Natural killer cell (primary cell): ENCODE measurements at regions of chr14 and their contacts with region 1.

Region 1: GRCh38 chr14:55430024-55430690 is 10.3 kb downstream of the TBPL2 start:
- DNase-seq: peak in 1 of 2 donors; percentile 84
- ATAC-seq: peak; percentile 74 to 89 (median 88)
- H3K4me3 ChIP-seq: no peak overlapping the region
- H3K4me3 Mint-ChIP-seq: no peak overlapping the region
- H3K27ac ChIP-seq: no peak overlapping the region
- H3K27ac Mint-ChIP-seq: no peak overlapping the region
- H3K4me1 ChIP-seq: peaks cover 6% of the 10 kb centered on the region
- H3K4me1 Mint-ChIP-seq: peaks cover 9 to 15% of the 10 kb centered on the region in 2 donors
- H3K27me3 ChIP-seq: no peaks in the 10 kb centered on the region
- H3K27me3 Mint-ChIP-seq: peaks cover 0 to 12% of the 10 kb centered on the region in 2 donors
- CTCF ChIP-seq: peak; percentile 28

Region 2: GRCh38 chr14:55245657-55246268 is 184.4 kb before region 1 on chr14:
- intact Hi-C with region 1: loop called (anchors 1 kb)
- DNase-seq: peak in 1 of 2 donors; percentile 70
- ATAC-seq: peak in 2 of 3 donors; percentile 65 to 72
- H3K4me3 ChIP-seq: no peak overlapping the region
- H3K4me3 Mint-ChIP-seq: no peak overlapping the region
- H3K27ac ChIP-seq: no peak overlapping the region
- H3K27ac Mint-ChIP-seq: no peak overlapping the region
- H3K4me1 ChIP-seq: no peaks in the 10 kb centered on the region
- H3K4me1 Mint-ChIP-seq: no peaks in the 10 kb centered on the region
- H3K27me3 ChIP-seq: no peaks in the 10 kb centered on the region
- H3K27me3 Mint-ChIP-seq: peaks cover 29 to 51% of the 10 kb centered on the region in 2 donors
- CTCF ChIP-seq: peak; percentile 65